GM10248 (cell line): ENCODE measurements at regions of chr17 and their contacts with region 1.

Region 1: GRCh38 chr17:16380640-16381495 is at the start of gene UBB:
- DNase-seq: peak; percentile 94
- CTCF ChIP-seq: peak; percentile 6

Region 2: DNA sequence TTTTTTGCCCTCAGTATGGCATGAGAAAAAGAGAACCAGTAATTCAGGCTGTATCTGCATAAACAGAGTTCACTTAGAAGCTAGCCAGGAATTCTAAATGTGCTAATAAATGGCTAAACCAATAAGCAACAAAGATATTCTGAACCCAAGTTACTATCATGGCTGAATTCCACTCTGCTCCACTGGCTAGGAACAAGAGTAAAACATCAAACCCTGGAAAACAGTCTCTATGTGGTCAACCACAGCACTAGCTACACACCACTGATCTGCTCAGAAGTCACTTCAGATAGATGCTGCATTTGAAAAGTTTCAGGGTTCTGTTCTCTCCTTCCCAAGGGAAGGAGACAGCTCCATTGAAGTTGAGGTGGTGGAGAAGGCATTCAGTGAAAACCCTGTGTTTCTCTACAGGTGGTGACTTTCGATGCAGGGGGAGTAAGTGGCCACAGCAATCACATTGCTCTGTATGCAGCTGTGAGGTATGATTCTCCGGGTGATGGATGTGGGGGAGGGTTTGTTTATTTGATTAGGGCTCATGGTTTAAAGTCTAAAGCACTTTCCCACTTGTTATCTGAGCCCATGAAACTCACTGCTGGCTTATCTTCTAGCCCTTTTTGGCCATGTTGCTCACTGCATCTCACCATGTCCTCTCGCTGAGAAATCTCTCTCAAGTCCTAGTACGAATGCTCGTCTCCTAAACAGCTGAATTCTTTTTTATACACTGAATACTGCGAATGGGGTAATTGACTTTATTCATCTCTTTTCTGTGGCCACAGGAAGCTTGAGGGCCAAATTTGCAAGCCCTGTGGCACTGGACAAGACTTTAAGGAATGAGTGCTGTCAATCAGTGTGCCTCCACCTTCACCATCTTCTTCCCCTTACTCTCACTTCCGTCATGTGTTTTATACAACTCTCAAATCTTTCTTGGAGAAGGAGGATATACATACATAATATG is 67.5 kb before region 1 on chr17:
- CTCF ChIA-PET with region 1: no interaction called
- POLR2A ChIA-PET with region 1: no interaction called
- DNase-seq: no peak
- CTCF ChIP-seq: no peak

Region 3: GRCh38 chr17:16407911-16408588 is 27.2 kb after region 1 on chr17:
- CTCF ChIA-PET with region 1: interaction called, 7 read pairs
- POLR2A ChIA-PET with region 1: interaction called, 20 read pairs
- DNase-seq: peak; percentile 87
- CTCF ChIP-seq: no peak

Region 4: GRCh38 chr17:16415031-16415924 is 34.4 kb after region 1 on chr17 and contains the start of gene TRPV2:
- CTCF ChIA-PET with region 1: interaction called, 20 read pairs
- POLR2A ChIA-PET with region 1: interaction called, 23 read pairs
- DNase-seq: peak; percentile 78
- CTCF ChIP-seq: peak; percentile 86

Region 5: GRCh38 chr17:16491703-16492612 is 111.1 kb after region 1 on chr17 and contains the start of gene LRRC75A:
- CTCF ChIA-PET with region 1: no interaction called
- POLR2A ChIA-PET with region 1: no interaction called
- DNase-seq: peak; percentile 83
- CTCF ChIP-seq: no peak